ENCODE measurements at regions of chr1 and their contacts with region 1.

Region 1: DNA sequence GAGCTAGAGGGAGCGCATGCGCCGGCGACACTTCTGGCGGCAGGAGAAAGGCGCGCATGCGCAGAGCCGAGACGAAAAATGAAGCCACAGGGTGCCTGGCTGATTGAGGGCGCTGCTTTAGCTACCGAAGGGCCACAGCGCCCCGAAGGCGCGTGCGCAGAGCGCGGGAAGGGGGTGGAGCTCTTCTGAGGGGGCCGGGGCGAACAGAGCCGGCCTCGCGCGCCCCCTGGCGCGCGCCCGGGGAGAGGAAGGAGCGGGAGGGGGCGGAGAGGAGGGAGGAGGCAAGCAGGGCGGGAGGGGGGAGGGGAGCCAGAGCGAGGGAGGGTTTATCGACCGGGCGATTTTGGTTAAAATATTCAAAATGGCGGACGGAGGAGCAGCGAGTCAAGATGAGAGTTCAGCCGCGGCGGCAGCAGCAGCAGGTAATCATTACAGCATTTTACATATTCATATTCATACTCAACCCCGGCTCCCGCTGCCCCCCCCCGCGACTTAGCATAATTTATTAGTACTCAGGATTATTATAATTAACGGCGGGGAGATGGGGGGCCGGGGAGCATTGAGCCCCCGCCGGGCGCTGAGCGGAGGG is at the start of gene POU2F1:
- DNase-seq: peak; percentile 99
- H3K4me3 Mint-ChIP-seq: peak within 1 kb of the TSS; percentile 95
- H3K27ac Mint-ChIP-seq: peak within 1 kb of the TSS; percentile 98
- H3K4me1 Mint-ChIP-seq: peaks cover 45% of the 10 kb centered on the region
- H3K27me3 Mint-ChIP-seq: peaks cover 1% of the 10 kb centered on the region
- total RNA-seq, gene POU2F1: 17.7 to 20.1 TPM

Region 2: GRCh38 chr1:166838766-166839599 is 381.6 kb before region 1 on chr1 and contains the start of gene POGK:
- CTCF ChIA-PET with region 1: interaction called, 3 read pairs
- POLR2A ChIA-PET with region 1: interaction called, 3 read pairs
- intact Hi-C with region 1: loop called (anchors 5 kb)
- DNase-seq: peak; percentile 92
- H3K4me3 Mint-ChIP-seq: peak within 1 kb of the TSS; percentile 88
- H3K27ac Mint-ChIP-seq: peak within 1 kb of the TSS; percentile 95
- H3K4me1 Mint-ChIP-seq: peaks cover 41% of the 10 kb centered on the region
- H3K27me3 Mint-ChIP-seq: no peaks in the 10 kb centered on the region
- total RNA-seq, gene POGK: 43.0 to 43.1 TPM

Region 3: GRCh38 chr1:166947398-166948043 is 273.1 kb before region 1 on chr1:
- CTCF ChIA-PET with region 1: no interaction called
- POLR2A ChIA-PET with region 1: no interaction called
- intact Hi-C with region 1: no loop called
- DNase-seq: peak; percentile 11
- H3K4me3 Mint-ChIP-seq: no peak overlapping the region
- H3K27ac Mint-ChIP-seq: no peak overlapping the region
- H3K4me1 Mint-ChIP-seq: peaks cover 18% of the 10 kb centered on the region
- H3K27me3 Mint-ChIP-seq: peaks cover 20% of the 10 kb centered on the region

Region 4: DNA sequence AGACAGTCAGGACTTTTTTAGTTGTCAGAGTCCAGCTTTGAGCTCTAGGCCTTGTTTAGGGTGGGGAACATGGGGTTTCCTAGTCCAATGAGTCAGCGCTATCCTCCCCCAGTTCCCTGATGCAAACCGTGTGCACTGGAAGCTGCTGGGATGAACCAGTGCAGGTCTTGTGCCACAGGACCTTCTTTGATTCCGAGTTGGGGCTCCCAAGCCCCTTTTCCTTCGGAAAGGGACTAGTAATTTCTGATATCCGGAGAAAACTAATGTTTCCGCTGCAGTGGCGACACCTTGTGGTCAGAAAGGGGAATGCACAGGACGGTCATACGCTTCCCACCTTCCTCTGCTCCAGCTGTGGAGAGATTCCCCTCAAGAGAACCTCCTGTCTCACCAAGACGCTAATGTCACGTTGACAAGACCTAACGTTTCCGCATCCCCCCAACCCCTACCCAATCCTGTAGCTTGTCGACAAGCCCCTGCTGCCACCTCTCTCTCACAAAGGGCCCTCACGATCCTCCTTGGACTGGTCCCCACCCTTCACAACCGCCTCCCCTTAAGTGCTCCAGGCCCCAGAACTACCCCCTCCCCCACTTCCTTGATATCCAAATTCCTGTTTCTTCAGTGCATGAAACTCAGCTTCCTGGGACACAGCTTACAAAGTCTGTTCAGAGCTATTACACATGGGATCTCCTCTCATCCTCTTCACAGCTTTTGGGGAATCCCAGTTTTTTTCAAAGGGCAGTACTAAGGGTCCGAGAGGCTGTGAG is 161.4 kb before region 1 on chr1:
- CTCF ChIA-PET with region 1: interaction called, 44 read pairs
- POLR2A ChIA-PET with region 1: no interaction called
- intact Hi-C with region 1: no loop called
- DNase-seq: peak; percentile 84
- H3K4me3 Mint-ChIP-seq: no peak overlapping the region
- H3K27ac Mint-ChIP-seq: no peak overlapping the region
- H3K4me1 Mint-ChIP-seq: peaks cover 6% of the 10 kb centered on the region
- H3K27me3 Mint-ChIP-seq: no peaks in the 10 kb centered on the region

Region 5: DNA sequence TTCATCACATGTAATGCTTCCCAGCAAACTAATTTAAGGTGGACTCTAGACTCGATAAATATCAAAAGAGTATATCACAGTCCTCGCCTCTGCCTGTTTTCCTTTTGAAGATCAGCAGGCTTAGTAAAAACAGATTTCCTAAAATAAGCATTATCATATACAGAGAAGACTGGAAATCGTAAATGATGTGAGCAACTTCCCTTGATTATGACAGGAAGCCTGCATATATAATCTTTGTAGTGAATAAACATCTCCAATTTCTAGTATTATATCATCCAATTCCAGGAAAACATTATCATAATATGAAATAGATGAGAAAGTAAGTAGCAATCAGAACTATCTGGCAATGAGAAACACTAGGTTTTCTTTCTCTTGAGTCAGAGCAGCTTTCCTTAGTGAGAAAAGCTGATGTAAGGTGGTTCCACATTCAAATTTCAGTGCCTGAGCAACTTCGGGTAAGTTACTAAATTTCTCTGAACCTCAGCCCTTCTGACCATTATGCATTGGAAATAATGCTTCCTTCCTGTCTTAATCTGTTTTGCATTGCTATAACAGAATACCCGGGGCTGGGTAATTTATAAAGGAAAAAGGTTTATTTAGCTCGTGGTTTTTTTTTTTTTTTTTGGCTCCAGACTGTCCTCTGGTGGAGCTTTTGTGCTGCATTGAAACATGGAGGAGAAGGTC is 12.5 kb before region 1 on chr1:
- CTCF ChIA-PET with region 1: interaction called, 32 read pairs
- POLR2A ChIA-PET with region 1: interaction called, 12 read pairs
- intact Hi-C with region 1: loop called (anchors 1 kb)
- DNase-seq: no peak
- H3K4me3 Mint-ChIP-seq: no peak overlapping the region
- H3K27ac Mint-ChIP-seq: peak overlapping the region; percentile 95
- H3K4me1 Mint-ChIP-seq: peaks cover 38% of the 10 kb centered on the region
- H3K27me3 Mint-ChIP-seq: peaks cover 5% of the 10 kb centered on the region

Region 6: GRCh38 chr1:167447521-167448136 is 227.0 kb after region 1 on chr1:
- CTCF ChIA-PET with region 1: interaction called, 10 read pairs
- POLR2A ChIA-PET with region 1: no interaction called
- intact Hi-C with region 1: loop called (anchors 1 kb)
- DNase-seq: peak; percentile 90
- H3K4me3 Mint-ChIP-seq: peak overlapping the region; percentile 56
- H3K27ac Mint-ChIP-seq: peak overlapping the region; percentile 95
- H3K4me1 Mint-ChIP-seq: peaks cover 74% of the 10 kb centered on the region
- H3K27me3 Mint-ChIP-seq: no peaks in the 10 kb centered on the region

Region 7: DNA sequence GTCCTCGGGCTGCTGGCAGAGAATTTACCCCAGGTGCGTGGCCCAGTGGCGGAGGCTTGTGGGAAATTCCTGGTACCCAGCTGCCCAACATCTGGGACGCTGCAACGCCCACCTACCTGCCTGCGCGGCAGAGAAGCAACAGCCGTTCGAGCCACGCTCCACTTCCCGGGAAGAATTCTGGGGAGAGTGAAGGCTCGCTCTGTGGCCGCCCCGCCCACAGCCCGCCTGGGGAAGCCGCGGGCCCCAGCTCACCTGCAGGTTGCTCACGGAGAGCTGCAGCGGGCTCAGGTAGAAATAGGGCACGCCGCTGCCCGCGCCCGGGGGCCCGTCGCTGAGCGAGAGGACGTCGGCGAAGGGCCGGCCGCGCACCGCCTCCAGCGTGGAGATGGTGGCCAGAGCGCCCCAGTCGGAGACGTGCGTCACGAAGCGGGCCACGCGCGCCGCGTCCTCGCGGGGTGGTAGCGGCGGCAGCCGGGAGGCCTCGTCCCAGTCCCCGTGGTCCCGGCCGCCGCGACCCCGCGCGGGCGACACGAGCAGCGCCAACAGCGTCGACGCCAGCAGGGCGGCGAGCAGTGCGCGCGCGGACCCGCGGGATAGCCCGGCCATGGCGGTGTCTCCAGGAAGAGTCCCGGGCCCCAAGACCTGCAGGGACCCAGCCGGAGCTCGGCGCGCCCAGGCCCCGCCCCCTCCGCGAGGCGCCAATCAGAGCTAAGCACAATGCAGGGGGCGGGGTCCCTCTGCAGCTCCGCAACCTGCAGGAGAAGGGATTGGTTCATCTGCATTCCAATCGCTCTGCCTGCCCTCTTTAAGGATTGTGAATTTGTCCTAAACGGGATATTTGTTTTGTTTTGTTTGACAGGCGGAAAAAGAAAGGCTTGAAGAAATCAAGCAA is 332.8 kb after region 1 on chr1 and contains the start of gene CREG1:
- CTCF ChIA-PET with region 1: interaction called, 6 read pairs
- POLR2A ChIA-PET with region 1: no interaction called
- intact Hi-C with region 1: loop called (anchors 5 kb)
- DNase-seq: peak; percentile 94
- H3K4me3 Mint-ChIP-seq: peak within 1 kb of the TSS; percentile 84
- H3K27ac Mint-ChIP-seq: no peak within 1 kb of the TSS
- H3K4me1 Mint-ChIP-seq: peaks cover 35% of the 10 kb centered on the region
- H3K27me3 Mint-ChIP-seq: no peaks in the 10 kb centered on the region
- total RNA-seq, gene CREG1: 13.5 to 14.6 TPM

Measured in activated CD4-positive, alpha-beta memory T cell treated with anti-CD3 and anti-CD28 coated beads for 36 hours (primary cell).